Panc1 (cell line): ENCODE measurements at regions of chr16 and their contacts with region 1.

Region 1: DNA sequence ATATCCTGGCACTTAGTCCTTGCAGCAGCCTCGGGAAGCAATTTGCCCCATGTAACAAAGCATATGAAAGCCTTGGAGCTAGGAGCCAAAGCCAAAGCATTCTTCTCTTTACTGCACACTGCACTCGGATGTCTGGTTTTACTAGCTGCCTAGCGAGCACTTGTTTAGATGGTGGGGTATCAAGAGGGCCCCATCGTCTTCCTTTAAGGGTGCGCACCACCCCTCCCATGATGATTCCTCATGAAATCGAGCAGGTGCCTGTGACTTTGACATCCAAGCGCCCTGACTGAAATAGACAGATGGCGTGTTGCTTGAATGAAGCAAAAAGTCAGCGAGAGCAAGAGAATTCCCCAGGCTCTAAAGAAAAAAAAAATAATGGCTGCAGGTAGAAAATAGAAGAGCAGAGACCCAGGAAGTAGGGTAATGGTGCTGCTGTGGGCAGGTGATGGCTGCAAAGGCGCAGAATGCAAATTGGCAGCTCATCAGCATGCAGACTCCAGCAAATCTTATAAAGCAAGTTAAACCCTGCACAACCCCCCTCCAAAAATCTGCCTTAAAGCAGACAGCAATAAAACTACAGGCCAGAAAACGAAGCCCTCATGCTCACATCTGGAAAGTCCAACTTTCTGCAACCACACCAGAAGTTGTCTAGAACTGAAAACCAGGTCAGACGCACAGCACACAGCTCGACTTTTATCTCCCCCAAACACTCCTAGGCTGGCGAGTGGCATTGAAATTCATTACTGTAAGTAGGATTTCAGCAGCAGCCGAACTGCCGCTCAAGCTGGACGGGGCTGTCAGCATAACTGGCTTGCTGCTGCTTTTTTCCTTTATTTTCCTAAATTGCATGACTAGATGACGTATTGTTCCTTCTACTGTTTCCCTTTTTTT is 384.3 kb downstream of the RBFOX1 start:
- DNase-seq: no peak
- ATAC-seq: no peak
- H3K4me3 ChIP-seq: no peak overlapping the region
- H3K27ac ChIP-seq: no peak overlapping the region
- H3K4me1 ChIP-seq: no peaks in the 10 kb centered on the region
- H3K27me3 ChIP-seq: no peaks in the 10 kb centered on the region; the same call in 1 of the 2 replicates
- CTCF ChIP-seq: no peak

Region 2: DNA sequence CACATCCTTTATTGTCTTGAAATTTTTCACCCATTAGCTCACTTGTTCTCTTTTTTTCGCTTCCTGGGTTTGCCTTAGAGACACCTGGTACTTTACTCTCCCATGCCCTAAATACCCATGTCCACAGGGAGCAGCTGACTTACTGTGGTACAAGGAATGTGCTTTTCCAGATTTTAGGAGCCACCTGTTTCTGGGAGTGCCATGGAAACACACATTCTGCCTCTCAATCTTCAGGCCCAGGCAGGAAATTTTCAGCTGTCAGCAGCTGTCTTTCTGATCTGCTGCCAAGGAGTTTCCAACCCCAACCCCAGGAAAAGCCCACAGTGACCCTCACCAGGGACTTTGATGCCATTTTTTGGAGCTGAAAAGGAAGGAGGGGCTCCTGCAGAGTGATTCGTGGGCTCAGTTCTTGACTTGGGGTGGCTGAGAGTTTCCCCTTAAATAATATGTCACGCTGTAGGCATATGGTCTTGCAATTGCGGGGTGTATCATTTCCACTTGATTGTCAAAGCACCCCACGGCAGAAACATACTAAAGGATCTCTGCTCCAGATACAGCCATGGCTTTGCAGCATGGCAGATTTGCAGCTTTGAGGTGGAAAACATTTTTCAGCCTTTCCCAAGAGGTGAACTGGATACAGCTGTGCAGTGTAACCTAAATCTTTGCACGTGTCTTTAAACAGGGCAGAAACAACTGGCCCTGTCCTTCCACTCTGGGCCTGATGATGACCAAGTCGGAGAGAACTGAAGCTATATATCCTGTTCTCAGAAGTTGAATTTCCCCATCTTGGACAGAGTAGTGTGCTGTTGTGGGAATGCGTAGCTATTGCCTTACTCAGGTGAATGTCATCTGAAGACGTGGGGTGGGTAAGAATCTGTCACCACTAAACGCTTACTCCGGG is 365.0 kb before region 1 on chr16:
- CTCF ChIA-PET with region 1: no interaction called
- POLR2A ChIA-PET with region 1: no interaction called
- in situ Hi-C with region 1: no loop called
- intact Hi-C with region 1: no loop called
- DNase-seq: no peak
- ATAC-seq: no peak
- H3K4me3 ChIP-seq: no peak overlapping the region
- H3K27ac ChIP-seq: no peak overlapping the region
- H3K4me1 ChIP-seq: no peaks in the 10 kb centered on the region
- H3K27me3 ChIP-seq: no peaks in the 10 kb centered on the region
- CTCF ChIP-seq: no peak

Region 3: GRCh38 chr16:7534749-7535148 is 182.2 kb before region 1 on chr16:
- CTCF ChIA-PET with region 1: no interaction called
- POLR2A ChIA-PET with region 1: no interaction called
- in situ Hi-C with region 1: no loop called
- intact Hi-C with region 1: no loop called
- DNase-seq: no peak
- ATAC-seq: no peak
- H3K4me3 ChIP-seq: no peak overlapping the region
- H3K27ac ChIP-seq: no peak overlapping the region
- H3K4me1 ChIP-seq: no peaks in the 10 kb centered on the region
- H3K27me3 ChIP-seq: no peaks in the 10 kb centered on the region
- CTCF ChIP-seq: no peak

Region 4: GRCh38 chr16:7571366-7571765 is 145.5 kb before region 1 on chr16:
- CTCF ChIA-PET with region 1: no interaction called
- POLR2A ChIA-PET with region 1: no interaction called
- in situ Hi-C with region 1: no loop called
- intact Hi-C with region 1: no loop called
- DNase-seq: no peak
- ATAC-seq: no peak
- H3K4me3 ChIP-seq: no peak overlapping the region
- H3K27ac ChIP-seq: no peak overlapping the region
- H3K4me1 ChIP-seq: no peaks in the 10 kb centered on the region
- H3K27me3 ChIP-seq: no peaks in the 10 kb centered on the region
- CTCF ChIP-seq: no peak

Region 5: GRCh38 chr16:7772722-7773121 is 55.8 kb after region 1 on chr16:
- CTCF ChIA-PET with region 1: no interaction called
- POLR2A ChIA-PET with region 1: no interaction called
- in situ Hi-C with region 1: no loop called
- intact Hi-C with region 1: loop called (anchors 10 kb)
- DNase-seq: no peak
- ATAC-seq: no peak
- H3K4me3 ChIP-seq: no peak overlapping the region
- H3K27ac ChIP-seq: no peak overlapping the region
- H3K4me1 ChIP-seq: no peaks in the 10 kb centered on the region
- H3K27me3 ChIP-seq: no peaks in the 10 kb centered on the region
- CTCF ChIP-seq: no peak

Region 6: DNA sequence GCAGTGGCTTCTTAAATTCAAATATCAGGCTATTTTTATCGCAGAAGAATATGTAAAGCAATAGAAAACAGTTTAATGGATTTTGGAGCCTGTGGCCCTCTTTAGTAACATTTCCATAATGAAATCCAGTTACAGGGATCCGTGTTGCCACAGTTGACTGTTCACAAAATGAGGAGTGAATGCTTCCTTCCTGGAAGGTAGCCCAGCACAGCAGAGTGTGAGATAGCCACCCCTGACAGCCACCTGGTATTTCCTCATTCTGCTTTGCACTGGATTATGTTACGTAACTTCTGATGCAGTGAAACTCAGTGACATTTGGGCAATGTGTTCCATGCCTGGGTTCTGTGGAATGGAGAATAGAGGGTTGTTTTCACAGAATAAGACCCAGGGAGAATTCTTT is 132.9 kb after region 1 on chr16:
- CTCF ChIA-PET with region 1: no interaction called
- POLR2A ChIA-PET with region 1: no interaction called
- in situ Hi-C with region 1: no loop called
- intact Hi-C with region 1: no loop called
- DNase-seq: no peak
- ATAC-seq: no peak
- H3K4me3 ChIP-seq: no peak overlapping the region
- H3K27ac ChIP-seq: no peak overlapping the region
- H3K4me1 ChIP-seq: no peaks in the 10 kb centered on the region
- H3K27me3 ChIP-seq: no peaks in the 10 kb centered on the region
- CTCF ChIP-seq: no peak